ENCODE measurements at regions of chr10 and their contacts with region 1.

Region 1: GRCh38 chr10:121672733-121673132 is 74.5 kb upstream of the FGFR2 start:
- DNase-seq: no peak
- H3K4me3 Mint-ChIP-seq: no peak overlapping the region
- H3K27ac Mint-ChIP-seq: no peak overlapping the region
- H3K4me1 Mint-ChIP-seq: no peaks in the 10 kb centered on the region
- H3K27me3 Mint-ChIP-seq: no peaks in the 10 kb centered on the region

Region 2: DNA sequence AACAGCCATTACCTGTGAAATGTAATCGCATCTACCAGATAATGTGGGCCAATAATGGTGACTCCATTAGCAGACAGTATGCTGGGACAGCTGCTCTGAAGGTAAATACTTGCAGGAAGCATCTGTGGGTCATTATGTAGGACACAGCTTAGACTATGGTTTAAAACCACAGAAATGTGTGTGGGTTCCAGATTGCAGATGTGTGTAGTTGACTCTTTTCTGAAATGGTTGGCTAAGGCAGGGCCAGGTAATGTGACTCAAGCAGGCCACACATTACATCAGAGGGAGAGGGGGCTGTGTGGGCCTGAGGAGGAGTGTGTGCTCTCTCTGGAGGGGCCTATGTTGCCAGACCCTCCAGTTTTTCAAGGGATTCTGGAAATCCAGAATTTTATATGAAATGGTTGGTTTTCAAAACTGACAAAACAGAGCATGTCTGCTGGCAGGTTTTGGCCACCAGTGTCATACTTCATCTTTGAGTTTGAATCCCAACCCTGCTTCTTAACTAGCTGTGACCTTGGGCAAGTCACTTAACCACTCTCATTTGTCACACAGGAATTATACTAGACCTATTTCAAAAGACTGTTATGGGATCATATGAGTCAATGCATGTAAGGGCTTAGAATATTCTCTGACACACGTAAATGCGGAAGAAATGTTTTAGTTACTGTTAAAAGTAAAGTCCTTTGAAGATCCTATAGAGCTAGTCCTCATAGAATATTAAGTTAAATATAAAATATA is 1864.6 kb before region 1 on chr10:
- intact Hi-C with region 1: no loop called
- DNase-seq: no peak
- H3K4me3 Mint-ChIP-seq: no peak overlapping the region
- H3K27ac Mint-ChIP-seq: no peak overlapping the region
- H3K4me1 Mint-ChIP-seq: peaks cover 6% of the 10 kb centered on the region
- H3K27me3 Mint-ChIP-seq: no peaks in the 10 kb centered on the region

Region 3: DNA sequence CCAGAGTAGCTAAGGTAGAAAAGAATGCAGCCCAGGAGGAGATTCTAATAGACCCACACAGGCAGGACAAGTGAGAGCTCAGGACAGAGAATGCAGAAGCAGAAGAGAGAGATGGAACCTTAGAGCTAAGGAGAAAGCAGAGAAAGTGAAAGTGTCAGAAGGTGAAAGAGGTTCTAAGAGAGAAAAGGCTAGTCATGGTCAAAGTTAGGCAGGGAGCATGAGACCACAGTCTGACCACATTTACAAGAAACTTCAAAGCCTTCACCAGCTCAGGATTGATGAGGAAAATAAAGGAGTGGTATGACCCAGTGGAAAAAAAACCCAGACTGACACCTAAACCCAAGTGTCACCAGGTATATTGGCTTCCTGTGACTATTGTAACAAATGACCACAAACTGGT is 953.4 kb before region 1 on chr10:
- intact Hi-C with region 1: loop called (anchors 5 kb)
- DNase-seq: no peak
- H3K4me3 Mint-ChIP-seq: no peak overlapping the region
- H3K27ac Mint-ChIP-seq: no peak overlapping the region
- H3K4me1 Mint-ChIP-seq: no peaks in the 10 kb centered on the region
- H3K27me3 Mint-ChIP-seq: no peaks in the 10 kb centered on the region

Region 4: DNA sequence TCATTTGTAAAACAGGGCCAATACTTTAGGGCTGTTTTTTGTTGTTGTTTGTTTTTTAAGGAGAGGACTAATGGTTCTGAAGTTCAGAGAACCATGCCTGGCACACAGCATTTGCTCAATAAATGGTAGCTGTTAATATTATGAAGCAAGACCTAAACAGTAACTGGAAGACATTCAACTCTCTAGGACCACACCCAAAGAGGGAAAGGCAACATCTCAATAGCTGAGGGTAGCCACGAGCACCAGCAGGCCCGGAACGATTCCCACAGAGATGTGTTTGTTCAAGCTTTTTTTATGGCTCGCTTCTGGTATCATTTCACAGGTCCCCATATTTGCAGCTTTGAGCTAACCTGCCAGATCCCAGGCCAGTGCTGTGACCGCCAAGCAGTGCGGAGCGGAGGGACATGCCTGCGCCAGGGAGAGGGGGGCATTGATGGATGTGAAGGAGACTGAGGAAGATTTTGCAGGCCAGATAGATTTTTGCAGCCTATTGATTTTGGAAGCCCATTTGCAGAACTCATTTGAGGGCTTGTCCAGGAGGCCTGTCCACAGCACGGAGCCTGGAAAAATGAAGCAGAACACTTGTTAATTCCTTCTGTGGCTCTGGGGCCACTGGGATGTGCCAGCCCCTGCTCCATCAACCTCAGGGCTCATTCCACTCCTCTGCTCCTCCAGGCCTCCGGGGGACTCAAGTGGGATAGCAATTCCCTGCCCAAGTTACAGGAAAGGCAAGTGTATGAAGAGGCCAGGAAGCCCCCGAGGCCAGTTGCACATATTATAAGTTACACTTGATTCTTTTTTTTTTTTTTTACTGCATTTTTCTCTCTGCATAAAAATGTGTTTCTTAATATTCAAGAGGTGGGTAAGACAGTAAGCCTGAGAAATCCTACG is 17.2 kb before region 1 on chr10:
- intact Hi-C with region 1: no loop called
- DNase-seq: no peak
- H3K4me3 Mint-ChIP-seq: no peak overlapping the region
- H3K27ac Mint-ChIP-seq: no peak overlapping the region
- H3K4me1 Mint-ChIP-seq: no peaks in the 10 kb centered on the region
- H3K27me3 Mint-ChIP-seq: no peaks in the 10 kb centered on the region

Region 5: DNA sequence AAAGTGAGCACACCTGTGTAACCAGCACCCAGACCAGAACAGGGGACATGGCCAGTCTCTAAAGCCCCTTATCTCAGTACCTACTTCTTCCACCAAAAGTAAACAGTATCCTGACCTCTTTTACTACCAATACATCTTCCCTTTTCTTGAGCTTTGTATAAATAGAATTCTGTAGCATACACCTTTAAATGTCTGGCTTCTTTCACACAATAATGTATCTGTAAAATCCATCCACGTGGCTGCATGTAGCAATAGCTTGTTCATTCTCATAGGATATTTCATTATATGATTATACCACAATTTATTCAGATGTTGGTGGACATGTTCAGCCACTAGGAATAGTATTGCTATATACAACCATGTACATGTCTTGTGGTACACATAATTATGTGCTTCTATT is 639.0 kb after region 1 on chr10:
- intact Hi-C with region 1: no loop called
- DNase-seq: no peak
- H3K4me3 Mint-ChIP-seq: no peak overlapping the region
- H3K27ac Mint-ChIP-seq: no peak overlapping the region
- H3K4me1 Mint-ChIP-seq: no peaks in the 10 kb centered on the region
- H3K27me3 Mint-ChIP-seq: peaks cover 11% of the 10 kb centered on the region

Measured in activated T-helper 1 cell treated with anti-CD3 and anti-CD28 coated beads, Interleukin-12 subunit alpha, Interleukin-12 subunit beta, Interleukin-2, Interleukin-4 antibody, amounts not matched to agents 30 ng/mL and 10 ng/mL and 1 ng/mL, durations not matched to agents 14 hours and 24 hours and 36 hours (primary cell).